ENCODE measurements at regions of chr3 and their contacts with region 1.

Region 1: DNA sequence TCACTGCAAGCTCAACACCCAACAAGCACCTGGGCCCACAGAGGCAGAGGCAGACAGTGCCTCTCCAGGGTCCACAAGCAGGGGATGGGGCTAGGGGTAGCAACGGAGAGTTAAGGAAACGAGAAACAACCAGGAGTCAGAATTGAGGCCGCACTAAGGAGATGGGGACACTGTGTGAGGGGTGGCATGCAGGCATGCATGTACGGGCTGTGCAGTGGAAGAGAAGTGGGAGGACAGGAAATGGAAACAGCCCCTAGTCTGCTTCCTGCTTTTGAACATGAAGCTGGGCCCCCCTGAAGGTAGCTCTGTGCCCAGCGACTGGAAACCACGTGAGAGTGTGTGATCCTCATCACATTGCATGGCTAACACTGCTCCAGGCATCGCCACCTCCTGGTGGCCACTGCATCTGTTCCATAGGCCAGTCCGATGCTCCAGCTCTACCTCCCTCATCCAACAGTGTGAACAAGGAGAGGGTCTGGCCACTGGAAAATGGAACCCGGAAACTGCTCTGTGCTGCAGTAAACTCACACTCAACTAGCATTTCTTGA is 44.0 kb downstream of the XXYLT1 start:
- DNase-seq: peak; percentile 5

Region 2: DNA sequence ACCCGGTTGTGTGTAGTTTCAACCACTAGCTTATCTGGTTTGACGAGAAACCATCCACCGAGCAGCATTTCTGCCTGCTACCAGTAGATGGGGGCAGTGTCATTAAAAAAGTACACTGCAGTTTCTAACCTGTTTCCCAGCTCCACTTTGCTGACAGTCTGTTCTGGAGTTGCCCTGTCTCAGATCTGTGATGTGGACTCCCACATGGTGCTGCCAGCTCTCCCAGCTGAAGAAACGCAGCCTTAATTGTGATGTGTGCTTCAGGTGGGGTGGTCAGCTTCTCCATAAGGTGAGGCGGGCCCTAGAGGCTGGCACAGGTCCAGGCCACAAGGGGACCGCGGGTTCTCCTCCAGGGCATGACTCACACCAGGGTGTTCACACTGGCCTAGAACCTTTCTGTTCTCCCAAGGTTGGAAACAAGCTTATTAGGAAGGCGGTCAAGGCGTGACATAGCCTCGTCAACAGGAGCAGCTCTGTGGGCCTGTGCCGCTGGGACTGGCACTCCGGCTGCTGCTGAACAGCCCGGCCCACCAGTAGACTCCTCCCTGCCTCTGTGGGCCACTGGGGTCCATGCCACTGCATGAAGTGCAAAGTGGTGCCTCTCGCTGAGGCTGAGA is 544.2 kb before region 1 on chr3:
- in situ Hi-C with region 1: loop called (anchors 25 kb)
- DNase-seq: peak; percentile 77

Region 3: DNA sequence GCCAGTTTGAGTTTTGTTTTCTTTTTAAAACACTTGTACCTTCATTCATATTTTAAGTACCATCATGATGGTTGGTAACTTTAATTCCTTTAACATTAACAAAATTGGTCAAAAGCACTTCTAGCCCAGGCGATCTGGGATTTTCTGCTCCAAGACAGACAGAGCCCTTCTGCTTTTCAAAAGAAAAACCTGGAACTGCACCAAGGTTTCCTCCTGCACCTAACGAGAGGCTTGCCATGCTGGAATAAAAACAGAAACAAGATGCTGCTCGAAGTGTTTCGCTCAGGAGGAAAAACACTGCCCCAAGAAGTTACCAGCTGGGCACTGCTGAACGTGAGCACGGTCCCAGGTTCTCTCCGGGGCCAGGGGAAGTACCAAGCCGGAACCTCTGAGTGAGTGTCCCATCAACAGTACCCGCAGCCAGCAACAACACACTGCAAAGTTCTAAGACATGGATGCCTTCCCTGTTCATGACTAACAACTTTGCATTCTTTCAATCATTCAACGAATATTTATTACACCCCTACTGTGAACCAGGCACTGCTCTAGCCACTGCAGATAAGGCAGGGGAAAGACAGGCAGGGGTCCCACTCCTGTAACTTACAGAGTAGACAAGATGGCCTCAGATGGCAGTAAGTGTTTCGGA is 54.8 kb before region 1 on chr3:
- in situ Hi-C with region 1: no loop called
- DNase-seq: no peak

Region 4: GRCh38 chr3:195522254-195523023 is 295.5 kb after region 1 on chr3:
- in situ Hi-C with region 1: no loop called
- DNase-seq: peak; percentile 33